Ovary (tissue), 10 donors: ENCODE measurements at regions of chr10 and their contacts with region 1.

Region 1: GRCh38 chr10:24989867-24990266 is 26.1 kb downstream of the ENKUR start:
- DNase-seq: no peak
- H3K4me3 ChIP-seq: no peak overlapping the region
- H3K27ac ChIP-seq: no peak overlapping the region
- H3K4me1 ChIP-seq: peaks cover 3% of the 10 kb centered on the region
- H3K27me3 ChIP-seq: no peaks in the 10 kb centered on the region
- CTCF ChIP-seq: peak in 2 of 3 donors; percentile 14 to 36
- EP300 ChIP-seq: no peak
- POLR2A ChIP-seq: no peak

Region 2: GRCh38 chr10:24465891-24466818 is 523.7 kb before region 1 on chr10:
- intact Hi-C with region 1: no loop called
- DNase-seq: no peak
- H3K4me3 ChIP-seq: no peak overlapping the region
- H3K27ac ChIP-seq: no peak overlapping the region
- H3K4me1 ChIP-seq: peaks cover 3% of the 10 kb centered on the region
- H3K27me3 ChIP-seq: no peaks in the 10 kb centered on the region
- CTCF ChIP-seq: no peak
- EP300 ChIP-seq: no peak
- POLR2A ChIP-seq: no peak

Region 3: DNA sequence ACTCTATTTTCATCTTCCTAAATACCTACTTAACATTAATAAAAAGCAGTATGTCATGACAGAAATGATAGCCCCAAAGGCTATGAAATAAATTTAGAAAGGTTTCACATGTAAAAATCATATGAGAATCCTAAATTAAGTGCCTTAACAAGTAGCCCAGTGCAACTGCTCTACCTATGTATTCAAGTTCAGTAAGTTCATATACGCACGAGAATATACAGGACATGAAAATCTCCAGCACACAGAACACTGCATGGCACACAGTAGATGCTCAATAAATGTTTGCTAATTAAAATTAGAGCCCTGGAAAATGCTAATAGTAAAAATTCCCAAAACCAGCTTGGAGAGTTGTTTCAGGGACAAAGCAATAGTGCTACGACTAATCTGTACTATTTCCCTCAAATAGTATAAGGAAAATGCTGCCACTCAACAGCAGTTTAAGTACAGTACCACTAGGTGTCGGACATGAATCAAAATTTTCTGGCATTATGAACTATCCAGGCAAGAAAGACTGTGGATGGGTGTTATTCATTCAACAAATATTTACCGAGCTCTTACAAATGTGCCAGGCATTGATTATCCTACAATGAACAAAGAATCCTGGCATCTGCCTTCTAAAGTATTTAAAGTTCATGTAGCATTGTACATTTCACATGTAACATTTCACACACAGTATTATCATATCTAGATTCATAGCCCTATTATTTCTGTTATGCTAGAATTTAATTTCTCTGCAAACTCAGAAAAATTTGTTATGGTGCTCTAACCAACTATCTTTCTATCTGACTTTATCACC is 347.0 kb before region 1 on chr10:
- intact Hi-C with region 1: loop called (anchors 5 to 10 kb)
- DNase-seq: no peak
- H3K4me3 ChIP-seq: no peak overlapping the region
- H3K27ac ChIP-seq: no peak overlapping the region
- H3K4me1 ChIP-seq: peaks cover 2% of the 10 kb centered on the region
- H3K27me3 ChIP-seq: no peaks in the 10 kb centered on the region
- CTCF ChIP-seq: peak; percentile 32 to 70 (median 63)
- EP300 ChIP-seq: no peak
- POLR2A ChIP-seq: no peak